ENCODE measurements at regions of chrX and their contacts with region 1.

Region 1: DNA sequence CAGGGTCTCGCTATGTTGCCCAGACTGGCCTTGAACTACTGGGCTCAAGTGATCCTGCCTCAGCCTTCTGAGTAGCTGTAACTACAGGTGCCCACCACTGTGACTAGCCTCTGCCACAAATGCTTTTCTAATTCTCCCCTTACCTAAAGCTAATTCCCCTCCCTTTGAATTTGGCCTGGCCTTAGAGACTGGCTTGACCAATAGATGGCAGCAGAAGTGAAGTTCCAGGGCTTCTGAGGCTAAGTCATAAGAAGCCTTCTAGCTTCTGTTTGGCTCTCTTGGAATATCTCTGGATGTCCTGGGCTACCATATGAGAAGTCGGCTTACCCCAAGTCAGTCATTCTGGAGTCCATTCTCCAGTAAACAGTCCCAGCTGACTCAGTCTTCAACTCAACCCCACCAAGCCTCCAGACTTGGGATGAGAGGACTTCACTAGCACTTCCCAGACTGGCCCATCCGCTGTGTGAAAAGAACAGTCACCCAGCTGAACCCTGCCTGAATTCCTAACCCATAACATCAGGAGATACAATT is 61.0 kb downstream of the HPRT1 start:
- DNase-seq: peak; percentile 41
- H3K4me3 ChIP-seq: no peak overlapping the region
- H3K27ac ChIP-seq: no peak overlapping the region
- H3K4me1 ChIP-seq: no peaks in the 10 kb centered on the region
- CTCF ChIP-seq: peak; percentile 72

Region 2: DNA sequence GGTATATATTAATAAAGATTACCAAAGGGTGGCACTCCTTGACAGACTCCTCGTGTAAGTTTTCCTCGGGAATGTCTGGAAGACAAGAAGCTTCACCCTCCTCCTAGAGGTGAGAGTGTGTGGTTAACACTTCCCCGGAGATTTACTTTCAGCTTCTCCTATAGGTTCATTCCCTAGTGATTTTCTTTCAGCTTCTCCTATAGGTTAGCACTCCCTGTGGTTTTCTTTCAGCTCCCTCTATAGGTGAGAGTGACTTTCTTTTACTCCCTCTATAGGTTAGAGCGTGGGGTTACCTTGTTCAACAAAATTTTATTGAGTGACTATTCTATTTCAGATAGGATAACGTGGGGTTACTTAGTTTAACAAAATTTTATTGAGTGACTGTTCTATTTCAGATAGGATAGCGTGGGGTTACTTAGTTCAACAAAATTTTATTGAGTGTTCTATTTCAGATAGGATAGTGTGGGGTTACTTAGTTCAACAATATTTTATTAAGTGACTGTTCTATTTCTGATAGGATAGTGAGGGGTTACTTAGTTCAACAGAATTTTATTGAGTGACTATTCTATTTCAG is 243.4 kb after region 1 on chrX:
- CTCF ChIA-PET with region 1: no interaction called
- POLR2A ChIA-PET with region 1: no interaction called
- intact Hi-C with region 1: loop called (anchors 5 kb)
- DNase-seq: peak; percentile 34
- H3K4me3 ChIP-seq: no peak overlapping the region
- H3K27ac ChIP-seq: no peak overlapping the region
- H3K4me1 ChIP-seq: no peaks in the 10 kb centered on the region
- CTCF ChIP-seq: peak; percentile 71

Measured in OCI-LY7 (cell line).